B cell (primary cell): ENCODE measurements at regions of chr3 and their contacts with region 1.

Region 1: GRCh38 chr3:16247276-16248061 is 17.3 kb downstream of the DPH3 start:
- DNase-seq: peak; percentile 86
- ATAC-seq: peak; percentile 93
- H3K4me3 ChIP-seq: no peak overlapping the region
- H3K4me3 Mint-ChIP-seq: peak overlapping the region; percentile 18
- H3K27ac ChIP-seq: no peak overlapping the region
- H3K27ac Mint-ChIP-seq: no peak overlapping the region
- H3K4me1 ChIP-seq: peaks cover 1 to 8% of the 10 kb centered on the region in 2 donors
- H3K4me1 Mint-ChIP-seq: peaks cover 12% of the 10 kb centered on the region
- H3K27me3 ChIP-seq: peaks cover 0 to 10% (median 0%) of the 10 kb centered on the region in 4 experiments
- H3K27me3 Mint-ChIP-seq: peaks cover 8% of the 10 kb centered on the region
- CTCF ChIP-seq: peak; percentile 87

Region 2: GRCh38 chr3:16048435-16049318 is 198.8 kb before region 1 on chr3:
- CTCF ChIA-PET with region 1: interaction called, 17 read pairs
- POLR2A ChIA-PET with region 1: no interaction called
- intact Hi-C with region 1: no loop called
- DNase-seq: peak; percentile 56
- ATAC-seq: peak; percentile 81
- H3K4me3 ChIP-seq: no peak overlapping the region
- H3K4me3 Mint-ChIP-seq: peak overlapping the region; percentile 35
- H3K27ac ChIP-seq: no peak overlapping the region
- H3K27ac Mint-ChIP-seq: no peak overlapping the region
- H3K4me1 ChIP-seq: no peaks in the 10 kb centered on the region
- H3K4me1 Mint-ChIP-seq: no peaks in the 10 kb centered on the region
- H3K27me3 ChIP-seq: no peaks in the 10 kb centered on the region
- H3K27me3 Mint-ChIP-seq: peaks cover 6% of the 10 kb centered on the region
- CTCF ChIP-seq: peak; percentile 82

Region 3: DNA sequence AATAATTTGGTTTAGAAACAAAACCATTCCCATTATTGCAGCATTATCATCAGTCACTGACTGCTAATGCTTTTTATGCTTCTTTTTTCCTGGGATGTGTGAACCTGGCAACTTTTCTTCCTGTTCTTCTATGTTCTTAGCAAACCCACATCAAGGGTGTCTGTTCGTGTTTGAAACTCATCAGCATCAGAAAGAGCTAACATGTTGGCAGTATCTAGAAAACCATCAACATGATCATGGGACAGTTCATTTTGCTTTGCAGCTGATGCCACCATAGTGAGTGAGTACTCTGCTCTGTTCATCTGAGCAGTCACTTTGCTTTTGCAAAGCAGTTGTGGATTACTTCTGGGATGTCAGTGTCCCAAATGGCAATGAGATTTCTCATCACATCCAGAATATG is 11.4 kb after region 1 on chr3:
- CTCF ChIA-PET with region 1: interaction called, 13 read pairs
- POLR2A ChIA-PET with region 1: no interaction called
- intact Hi-C with region 1: no loop called
- DNase-seq: no peak
- ATAC-seq: no peak
- H3K4me3 ChIP-seq: no peak overlapping the region
- H3K4me3 Mint-ChIP-seq: no peak overlapping the region
- H3K27ac ChIP-seq: no peak overlapping the region
- H3K27ac Mint-ChIP-seq: no peak overlapping the region
- H3K4me1 ChIP-seq: peaks cover under 1 to 1% of the 10 kb centered on the region in 2 donors
- H3K4me1 Mint-ChIP-seq: peaks cover under 1% of the 10 kb centered on the region
- H3K27me3 ChIP-seq: no peaks in the 10 kb centered on the region
- H3K27me3 Mint-ChIP-seq: peaks cover 3% of the 10 kb centered on the region
- CTCF ChIP-seq: no peak